ENCODE measurements at regions of chr1 and their contacts with region 1.

Region 1: DNA sequence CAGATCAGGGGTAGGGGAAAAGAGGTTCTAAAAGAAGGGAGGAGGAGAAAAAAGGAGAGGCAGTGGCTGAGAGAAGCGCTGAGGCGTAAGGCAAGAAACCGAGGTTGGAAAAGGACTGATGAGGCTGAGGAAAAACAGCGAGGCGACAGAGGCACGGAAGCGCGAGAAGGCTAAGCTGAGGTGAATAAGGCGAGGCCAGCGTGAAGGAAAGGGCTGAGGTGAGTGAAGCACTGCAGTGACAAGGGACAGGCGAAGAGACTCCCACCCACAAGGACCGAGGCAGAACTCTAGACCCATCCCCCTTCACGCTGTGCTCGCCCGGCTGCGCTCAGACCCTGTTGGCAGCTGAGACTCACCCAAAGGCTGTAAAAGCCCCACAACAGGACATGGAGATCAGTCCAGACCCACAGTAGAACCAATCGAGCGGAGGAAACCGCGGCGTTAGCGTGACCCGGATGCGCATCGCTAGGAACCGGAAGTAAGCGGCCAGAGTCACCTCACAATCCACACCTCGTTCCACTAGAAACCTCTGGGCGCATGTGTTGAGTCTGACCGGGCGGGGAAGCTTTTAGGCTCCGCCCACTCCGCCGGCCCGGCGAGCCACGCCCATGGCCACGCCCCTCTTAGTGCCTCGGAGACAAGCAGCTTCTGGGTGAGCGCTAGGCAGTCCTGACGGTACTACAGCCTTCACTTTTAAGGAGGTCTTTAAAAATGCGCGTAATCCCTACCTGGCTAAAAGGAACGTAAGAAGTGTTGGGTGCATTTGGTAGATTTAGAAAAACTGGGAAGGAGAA is at the start of gene EYA3:
- DNase-seq: peak; percentile 97
- H3K4me3 ChIP-seq: peak within 1 kb of the TSS; percentile 86 to 91
- H3K27ac ChIP-seq: peak within 1 kb of the TSS; percentile 83 to 90
- H3K4me1 ChIP-seq: peaks cover 16% of the 10 kb centered on the region in 2 experiments; a peak in 3 of 4 replicates
- H3K27me3 ChIP-seq: no peaks in the 10 kb centered on the region
- CTCF ChIP-seq: no peak
- EP300 ChIP-seq: no peak
- RAD21 ChIP-seq: no peak
- polyA plus RNA-seq, gene EYA3: 6.5 and 9.8 TPM in 2 replicates

Region 2: GRCh38 chr1:28021064-28021463 is 67.3 kb before region 1 on chr1:
- CTCF ChIA-PET with region 1: no interaction called
- POLR2A ChIA-PET with region 1: no interaction called
- DNase-seq: no peak
- H3K4me3 ChIP-seq: no peak overlapping the region
- H3K27ac ChIP-seq: no peak overlapping the region
- H3K4me1 ChIP-seq: no peaks in the 10 kb centered on the region
- H3K27me3 ChIP-seq: no peaks in the 10 kb centered on the region
- CTCF ChIP-seq: no peak
- EP300 ChIP-seq: no peak
- RAD21 ChIP-seq: no peak

Region 3: DNA sequence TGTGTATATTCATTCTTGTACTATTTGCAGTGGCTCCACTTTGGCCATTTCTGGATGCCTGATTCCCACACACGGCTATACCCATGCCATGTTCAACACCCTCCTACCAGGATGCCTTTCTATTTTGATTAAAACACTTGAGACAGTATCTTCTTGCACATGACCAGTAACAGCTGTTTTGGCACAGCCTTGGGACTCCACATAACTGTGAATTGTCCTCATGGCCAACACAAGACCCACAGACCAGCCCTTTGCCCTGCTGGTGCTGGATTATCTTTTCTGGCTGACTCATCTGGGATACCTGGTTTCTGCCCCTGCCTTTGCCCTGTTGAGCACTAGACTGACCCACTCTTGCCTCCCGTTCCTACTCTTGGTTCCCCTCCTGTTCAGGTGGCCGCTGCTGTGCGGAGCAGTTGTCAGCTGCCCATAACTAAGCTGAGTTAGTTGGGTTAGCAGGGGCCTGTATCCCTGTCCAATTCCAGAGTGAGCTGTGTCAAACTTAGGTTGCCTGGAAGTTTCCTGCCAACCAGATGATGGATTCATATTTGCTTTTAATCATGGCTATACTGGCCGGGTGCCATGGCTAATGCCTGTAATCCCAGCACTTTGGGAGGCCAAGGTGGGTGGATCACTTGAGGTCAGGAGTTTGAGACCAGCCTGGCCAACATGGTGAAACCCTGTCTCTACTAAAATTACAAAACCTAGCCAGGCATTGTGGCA is 10.8 kb after region 1 on chr1:
- CTCF ChIA-PET with region 1: interaction called, 11 read pairs
- POLR2A ChIA-PET with region 1: no interaction called
- DNase-seq: no peak
- H3K4me3 ChIP-seq: no peak overlapping the region
- H3K27ac ChIP-seq: no peak overlapping the region
- H3K4me1 ChIP-seq: no peaks in the 10 kb centered on the region
- H3K27me3 ChIP-seq: no peaks in the 10 kb centered on the region
- CTCF ChIP-seq: no peak
- EP300 ChIP-seq: no peak
- RAD21 ChIP-seq: no peak

Region 4: GRCh38 chr1:28104866-28105467 is 16.6 kb after region 1 on chr1:
- CTCF ChIA-PET with region 1: interaction called, 11 read pairs
- POLR2A ChIA-PET with region 1: no interaction called
- DNase-seq: peak; percentile 30
- H3K4me3 ChIP-seq: no peak overlapping the region
- H3K27ac ChIP-seq: no peak overlapping the region
- H3K4me1 ChIP-seq: 0 out of 4 replicates have a peak, but pooled peaks cover 0 to 7% of the 10 kb centered on the region in 2 experiments
- H3K27me3 ChIP-seq: no peaks in the 10 kb centered on the region
- CTCF ChIP-seq: no peak
- EP300 ChIP-seq: no peak
- RAD21 ChIP-seq: no peak

Region 5: GRCh38 chr1:28208818-28209441 is 120.6 kb after region 1 on chr1:
- CTCF ChIA-PET with region 1: interaction called, 59 read pairs
- POLR2A ChIA-PET with region 1: no interaction called
- DNase-seq: peak; percentile 59
- H3K4me3 ChIP-seq: peak overlapping the region in 1 of 2 experiments; percentile 30; a peak in 1 of 4 replicates
- H3K27ac ChIP-seq: no peak overlapping the region
- H3K4me1 ChIP-seq: no peaks in the 10 kb centered on the region
- H3K27me3 ChIP-seq: no peaks in the 10 kb centered on the region
- CTCF ChIP-seq: peak; percentile 80
- EP300 ChIP-seq: no peak
- RAD21 ChIP-seq: peak; percentile 91

Measured in SK-N-SH (cell line).